Lower leg skin (tissue), 4 donors: ENCODE measurements at regions of chr3 and their contacts with region 1.

Region 1: DNA sequence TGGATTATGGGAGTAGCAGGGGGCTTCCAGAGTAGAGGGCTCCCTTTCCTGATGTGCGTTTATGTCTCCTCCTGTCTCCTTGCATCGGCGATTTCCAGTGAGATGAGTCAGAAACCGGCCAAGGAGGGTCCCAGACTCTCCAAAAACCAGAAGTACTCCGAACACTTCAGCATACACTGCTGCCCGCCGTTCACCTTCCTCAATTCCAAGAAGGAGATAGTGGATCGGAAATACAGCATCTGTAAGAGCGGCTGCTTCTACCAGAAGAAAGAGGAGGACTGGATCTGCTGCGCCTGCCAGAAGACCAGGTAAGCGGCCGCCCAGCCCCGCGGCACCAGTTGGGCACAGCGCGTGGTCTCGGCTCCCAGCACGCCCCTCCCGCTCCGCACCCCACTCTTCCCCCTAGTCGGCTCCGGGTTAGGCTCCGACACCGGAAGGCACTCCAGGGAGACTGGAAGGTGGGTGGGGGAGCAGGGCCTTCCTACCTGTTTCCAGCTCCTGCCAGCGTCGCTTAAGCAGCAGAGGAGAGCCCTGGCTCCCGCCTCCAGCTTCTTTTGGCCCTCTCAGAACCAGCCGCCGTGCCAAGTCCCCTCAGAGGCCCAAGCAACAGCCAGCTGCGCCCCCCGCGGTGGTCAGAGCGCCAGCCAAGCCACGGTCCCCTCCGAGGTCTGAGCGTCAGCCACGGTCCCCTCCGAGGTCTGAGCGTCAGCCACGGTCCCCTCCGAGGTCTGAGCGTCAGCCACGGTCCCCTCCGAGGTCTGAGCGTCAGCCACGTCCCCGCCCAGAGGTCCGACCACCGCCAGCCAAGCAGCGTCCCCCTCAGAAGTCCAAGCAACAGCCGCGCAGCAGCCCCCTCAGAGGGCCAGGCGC is 34.7 kb downstream of the MOBP start:
- DNase-seq: no peak
- H3K4me3 ChIP-seq: no peak overlapping the region
- CTCF ChIP-seq: no peak
- POLR2A ChIP-seq: no peak

Region 2: DNA sequence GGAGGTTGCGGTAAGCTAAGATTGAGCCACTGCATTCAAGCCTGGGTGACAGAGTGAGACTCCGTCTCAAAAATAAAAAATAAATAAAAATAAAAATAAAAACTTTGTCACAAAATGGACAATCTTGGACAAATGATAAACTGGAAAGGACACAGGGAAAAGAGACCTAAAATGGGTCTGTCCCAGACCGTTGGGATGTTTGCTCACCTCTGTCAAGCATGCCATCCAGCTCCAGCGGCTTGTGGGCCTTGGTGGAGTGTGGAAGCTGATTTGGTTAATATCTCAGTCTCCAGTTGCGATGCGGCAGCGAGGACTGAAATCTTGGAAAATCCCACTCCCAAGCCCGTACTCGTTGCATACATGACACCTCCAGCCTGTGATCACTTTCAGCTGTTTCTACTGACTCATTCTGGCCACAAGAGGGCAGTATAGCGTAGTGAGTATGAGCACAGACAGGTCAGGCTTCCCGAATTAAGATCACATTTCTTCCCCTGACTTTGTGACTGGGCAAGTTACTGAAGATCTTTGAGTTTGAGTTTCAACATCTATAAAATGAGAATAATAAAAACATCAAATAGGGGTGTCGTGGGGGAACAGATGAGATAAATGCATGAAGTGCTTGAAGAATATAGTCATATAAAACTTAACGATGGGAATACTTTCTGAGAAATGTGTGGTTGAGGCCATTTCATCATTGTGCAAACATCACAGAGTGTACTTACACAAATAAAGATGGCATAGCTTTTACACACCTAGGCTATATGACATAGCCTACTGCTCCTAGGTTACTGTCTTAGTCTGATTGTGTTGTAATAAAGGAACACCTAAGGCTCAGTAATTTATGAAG is 54.3 kb before region 1 on chr3:
- intact Hi-C with region 1: loop called (anchors 10 kb)
- DNase-seq: peak in 1 of 2 donors; percentile 71
- H3K4me3 ChIP-seq: no peak overlapping the region
- CTCF ChIP-seq: no peak
- POLR2A ChIP-seq: no peak

Region 3: DNA sequence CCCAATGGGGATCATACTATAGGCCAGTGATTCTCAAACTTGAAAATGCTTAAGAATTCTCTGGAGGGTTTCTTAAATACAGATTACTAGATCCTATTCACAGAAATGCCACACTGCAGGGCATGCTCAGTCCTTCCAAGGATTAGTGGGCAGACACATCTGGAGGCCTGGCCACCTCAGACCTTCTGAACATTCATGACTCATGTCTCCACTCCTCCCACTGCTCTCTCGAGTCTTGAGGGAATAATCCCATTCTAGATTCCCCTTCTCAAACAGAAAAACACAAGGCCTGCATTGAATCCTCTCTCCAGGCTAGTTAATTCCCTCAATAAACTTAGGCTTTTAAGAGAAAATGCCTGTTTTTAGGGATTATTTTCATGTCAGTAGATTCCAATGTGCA is 1044.6 kb after region 1 on chr3:
- intact Hi-C with region 1: loop called (anchors 5 kb)
- DNase-seq: no peak
- H3K4me3 ChIP-seq: no peak overlapping the region
- CTCF ChIP-seq: no peak
- POLR2A ChIP-seq: no peak